ENCODE measurements at regions of chr5 and their contacts with region 1.

Region 1: DNA sequence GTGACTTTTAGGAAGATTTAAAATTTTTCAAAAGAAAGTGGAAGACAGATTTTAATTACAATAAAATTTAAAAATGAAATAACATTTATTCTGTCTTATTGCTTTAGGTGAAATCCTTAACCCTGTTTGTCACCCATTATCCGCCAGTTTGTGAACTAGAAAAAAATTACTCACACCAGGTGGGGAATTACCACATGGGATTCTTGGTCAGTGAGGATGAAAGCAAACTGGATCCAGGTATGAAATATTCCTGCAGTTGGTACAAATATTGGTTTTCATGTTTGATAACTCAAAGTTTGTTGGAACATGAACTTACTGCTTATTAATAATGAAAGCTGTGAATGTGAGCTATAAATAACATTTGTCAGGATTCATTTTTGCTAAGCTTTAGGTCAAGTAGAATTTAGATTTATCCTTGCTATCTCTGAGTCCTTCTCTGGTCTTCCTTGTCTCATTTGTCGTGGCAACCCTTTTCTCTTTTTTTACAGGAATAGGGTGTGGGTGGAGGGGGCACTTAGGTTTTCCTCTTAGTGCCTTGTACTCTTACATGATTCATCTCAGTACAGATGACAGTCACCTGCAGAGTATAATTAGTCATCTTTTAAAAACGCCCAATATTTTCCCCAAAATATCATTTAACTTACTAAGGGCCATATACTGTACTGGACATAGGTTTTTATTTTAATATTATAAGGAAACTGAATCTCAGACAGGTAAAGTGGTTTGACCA is 95.3 kb upstream of the RASGRF2 start:
- DNase-seq: no peak
- H3K4me3 Mint-ChIP-seq: peak overlapping the region; percentile 26
- H3K27ac Mint-ChIP-seq: peak overlapping the region; percentile 74
- H3K4me1 Mint-ChIP-seq: peaks cover 53% of the 10 kb centered on the region
- H3K27me3 Mint-ChIP-seq: no peaks in the 10 kb centered on the region

Region 2: DNA sequence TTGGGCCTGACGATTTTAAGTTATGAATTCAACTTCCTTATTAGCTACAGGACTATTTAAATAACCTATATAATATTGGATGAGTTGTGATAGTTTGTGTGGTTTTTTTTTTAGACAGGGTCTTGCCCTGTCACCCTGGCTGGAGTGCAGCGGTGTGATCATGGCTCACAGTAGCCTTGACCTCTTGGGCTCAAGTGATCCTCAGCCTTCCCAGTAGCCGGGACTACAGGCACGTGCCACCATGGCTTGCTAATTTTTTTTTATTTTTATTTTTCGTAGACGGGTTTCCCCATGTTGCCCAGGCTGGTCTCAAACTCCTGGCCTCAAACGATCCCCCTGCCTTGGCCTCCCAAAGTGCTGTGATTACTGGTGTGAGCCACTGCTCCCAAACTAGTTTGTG is 527.5 kb before region 1 on chr5:
- intact Hi-C with region 1: no loop called
- DNase-seq: no peak
- H3K4me3 Mint-ChIP-seq: no peak overlapping the region
- H3K27ac Mint-ChIP-seq: no peak overlapping the region
- H3K4me1 Mint-ChIP-seq: no peaks in the 10 kb centered on the region
- H3K27me3 Mint-ChIP-seq: peaks cover 19% of the 10 kb centered on the region

Region 3: GRCh38 chr5:80414113-80414512 is 450.8 kb before region 1 on chr5:
- intact Hi-C with region 1: no loop called
- DNase-seq: no peak
- H3K4me3 Mint-ChIP-seq: no peak overlapping the region
- H3K27ac Mint-ChIP-seq: no peak overlapping the region
- H3K4me1 Mint-ChIP-seq: peaks cover 5% of the 10 kb centered on the region
- H3K27me3 Mint-ChIP-seq: peaks cover 4% of the 10 kb centered on the region

Region 4: DNA sequence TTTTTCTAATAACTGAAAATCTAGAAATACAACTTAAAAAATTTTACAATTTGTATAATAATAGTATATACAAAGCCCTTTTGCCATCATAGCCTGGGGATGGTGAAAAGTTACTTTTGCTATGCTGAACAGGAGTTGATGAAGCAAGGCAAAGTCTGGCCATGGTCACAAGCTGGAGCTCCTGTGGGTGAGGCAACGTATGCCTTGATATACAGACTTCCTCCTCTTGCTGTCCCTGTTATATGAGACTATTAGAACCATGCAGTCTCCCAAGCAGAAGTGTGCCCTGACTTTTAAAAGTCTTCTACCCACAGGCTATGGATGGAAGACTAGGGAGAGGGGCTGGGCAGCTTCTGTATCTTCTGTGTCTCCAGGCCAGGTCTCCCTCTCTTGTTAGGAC is 361.2 kb before region 1 on chr5:
- intact Hi-C with region 1: no loop called
- DNase-seq: no peak
- H3K4me3 Mint-ChIP-seq: no peak overlapping the region
- H3K27ac Mint-ChIP-seq: no peak overlapping the region
- H3K4me1 Mint-ChIP-seq: peaks cover 3% of the 10 kb centered on the region
- H3K27me3 Mint-ChIP-seq: peaks cover 3% of the 10 kb centered on the region

Region 5: DNA sequence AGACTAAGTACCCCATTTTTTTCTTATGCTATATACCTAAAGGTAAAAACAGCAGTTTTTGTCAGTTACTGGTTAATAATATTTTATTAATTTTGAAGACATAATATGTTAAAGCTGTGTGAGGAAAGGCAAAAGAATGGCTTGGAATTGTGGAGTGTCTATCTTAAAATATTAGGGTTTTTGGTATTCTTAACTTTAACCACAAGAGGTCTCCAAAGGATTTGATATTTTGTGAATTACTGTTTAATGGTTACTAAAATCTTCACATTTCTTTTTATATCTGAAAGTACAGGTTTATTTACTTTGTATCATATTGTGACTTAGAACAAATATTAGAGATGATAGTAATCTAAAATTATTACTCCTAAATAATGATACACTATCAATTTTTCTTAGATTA is 178.1 kb before region 1 on chr5:
- intact Hi-C with region 1: no loop called
- DNase-seq: no peak
- H3K4me3 Mint-ChIP-seq: no peak overlapping the region
- H3K27ac Mint-ChIP-seq: no peak overlapping the region
- H3K4me1 Mint-ChIP-seq: peaks cover 20% of the 10 kb centered on the region
- H3K27me3 Mint-ChIP-seq: no peaks in the 10 kb centered on the region

Region 6: GRCh38 chr5:80763211-80763610 is 101.7 kb before region 1 on chr5:
- intact Hi-C with region 1: loop called (anchors 1 kb)
- DNase-seq: no peak
- H3K4me3 Mint-ChIP-seq: no peak overlapping the region
- H3K27ac Mint-ChIP-seq: no peak overlapping the region
- H3K4me1 Mint-ChIP-seq: peaks cover 34% of the 10 kb centered on the region
- H3K27me3 Mint-ChIP-seq: no peaks in the 10 kb centered on the region

Region 7: DNA sequence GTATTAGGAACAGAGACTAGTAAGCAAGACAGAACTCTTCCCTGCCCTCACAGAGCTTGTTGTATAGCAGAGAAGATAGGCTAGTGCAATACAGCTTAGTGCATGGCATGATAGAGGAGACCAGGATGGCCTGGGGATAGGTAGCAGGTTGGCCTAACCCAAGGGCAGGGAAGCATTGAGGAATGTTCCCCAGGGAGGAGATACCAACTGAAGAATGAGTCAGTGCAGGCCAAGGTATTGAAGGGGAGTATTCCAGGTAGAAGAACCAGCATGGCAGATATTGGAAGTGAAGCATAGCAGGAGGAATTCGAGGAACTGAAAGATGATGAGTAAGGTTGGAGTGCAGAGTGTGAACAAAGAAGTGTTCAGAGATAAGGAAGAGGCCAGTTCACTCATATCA is 71.5 kb before region 1 on chr5:
- intact Hi-C with region 1: loop called (anchors 2 kb)
- DNase-seq: no peak
- H3K4me3 Mint-ChIP-seq: no peak overlapping the region
- H3K27ac Mint-ChIP-seq: no peak overlapping the region
- H3K4me1 Mint-ChIP-seq: peaks cover 6% of the 10 kb centered on the region
- H3K27me3 Mint-ChIP-seq: no peaks in the 10 kb centered on the region

Region 8: GRCh38 chr5:80852331-80853245 is 12.3 kb before region 1 on chr5:
- intact Hi-C with region 1: loop called (anchors 2 kb)
- DNase-seq: no peak
- H3K4me3 Mint-ChIP-seq: no peak overlapping the region
- H3K27ac Mint-ChIP-seq: no peak overlapping the region
- H3K4me1 Mint-ChIP-seq: peaks cover 13% of the 10 kb centered on the region
- H3K27me3 Mint-ChIP-seq: no peaks in the 10 kb centered on the region

Region 9: DNA sequence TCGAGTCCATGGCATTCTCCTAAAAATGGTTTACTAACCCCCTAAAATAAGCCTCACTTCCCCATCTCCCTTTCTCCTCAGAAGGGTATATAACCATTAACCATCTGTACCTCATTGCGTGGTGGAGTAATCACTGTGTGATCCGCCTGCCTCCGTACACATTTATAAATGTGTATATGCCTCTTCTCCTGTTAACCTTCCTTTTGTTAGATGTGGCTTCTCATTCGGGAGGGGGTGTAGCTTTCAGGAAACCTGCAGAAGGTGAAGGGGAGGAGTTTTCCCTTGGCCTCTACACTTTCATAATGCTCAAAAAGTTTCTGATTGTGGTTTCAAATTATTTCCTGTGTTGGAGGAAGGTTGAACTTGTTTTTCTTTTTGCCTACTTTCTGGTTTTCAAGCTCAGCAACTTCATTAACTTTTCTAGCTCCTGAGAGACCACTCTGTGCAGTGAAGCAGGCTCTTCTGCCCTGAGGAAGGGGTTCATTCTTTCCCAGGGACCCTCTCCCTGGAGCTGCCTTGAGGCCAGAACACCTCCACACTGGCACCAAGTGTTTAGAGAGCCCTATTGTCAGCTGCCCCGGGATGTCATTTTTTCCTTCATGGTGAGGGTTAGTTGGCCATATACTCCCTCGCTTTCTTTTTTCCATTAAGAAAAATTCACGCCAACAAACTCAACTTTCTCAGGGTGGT is 142.2 kb after region 1 on chr5:
- intact Hi-C with region 1: loop called (anchors 2 kb)
- DNase-seq: peak; percentile 89
- H3K4me3 Mint-ChIP-seq: peak overlapping the region; percentile 82
- H3K27ac Mint-ChIP-seq: peak overlapping the region; percentile 94
- H3K4me1 Mint-ChIP-seq: peaks cover 41% of the 10 kb centered on the region
- H3K27me3 Mint-ChIP-seq: no peaks in the 10 kb centered on the region

Measured in activated CD4-positive, alpha-beta T cell treated with anti-CD3 and anti-CD28 coated beads, Interleukin-2, amount 10 ng/mL, durations not matched to agents 24 days and 14 days (primary cell).